A549 (cell line): ENCODE measurements at regions of chrX and their contacts with region 1.

Region 1: GRCh38 chrX:16771483-16772398 is 14.5 kb upstream of the TXLNG start:
- DNase-seq: peak; percentile 50 to 86
- ATAC-seq: peak; percentile 95 to 96
- H3K4me3 ChIP-seq: no peak overlapping the region
- H3K27ac ChIP-seq: peak overlapping the region; percentile 79 to 90
- H3K4me1 ChIP-seq: peaks cover 13% of the 10 kb centered on the region; the same call in 2 of the 3 replicates
- CTCF ChIP-seq: no peak
- EP300 ChIP-seq: no peak
- POLR2A ChIP-seq: peak; percentile 77
- RAD21 ChIP-seq: no peak

Region 2: DNA sequence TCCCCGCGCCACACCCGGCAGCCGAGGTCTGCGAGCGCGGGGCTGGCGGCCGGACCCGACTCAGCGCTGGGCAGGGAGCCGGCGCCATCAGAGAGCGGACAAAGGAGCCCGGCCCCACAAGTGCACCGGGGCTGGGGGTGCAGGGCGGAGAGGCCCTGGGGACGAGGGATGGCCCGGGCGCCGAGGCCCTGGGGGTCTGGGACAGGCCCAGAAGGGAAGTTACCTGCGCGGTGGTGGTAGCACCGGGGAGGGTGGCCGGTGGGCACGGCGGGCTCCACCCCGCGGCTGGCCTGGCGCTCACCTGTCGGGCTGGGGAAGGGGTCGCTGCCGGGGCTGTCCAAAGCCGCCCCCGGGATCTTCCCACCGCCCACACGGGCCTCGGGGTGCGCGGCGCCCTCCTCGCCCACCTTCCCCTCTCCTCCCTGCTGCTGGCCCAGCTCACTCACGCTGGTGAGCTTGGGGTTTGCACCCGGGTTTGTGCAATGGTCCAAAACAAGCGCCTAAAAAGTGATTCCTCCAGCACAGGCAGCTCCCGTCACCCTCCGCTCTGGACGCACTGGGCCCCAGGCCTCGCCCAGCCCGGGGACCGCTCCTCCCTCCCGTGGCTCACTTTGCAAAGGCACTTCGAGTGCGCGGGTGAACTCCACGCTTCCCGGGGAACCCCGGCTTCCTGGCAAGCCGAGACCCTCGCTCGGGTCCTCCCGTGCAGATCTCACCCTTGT is 59.5 kb before region 1 on chrX and contains the start of gene CTPS2:
- CTCF ChIA-PET with region 1: no interaction called
- POLR2A ChIA-PET with region 1: interaction called, 11 read pairs
- DNase-seq: peak; percentile 69 to 79
- ATAC-seq: peak; percentile 96 to 98
- H3K4me3 ChIP-seq: peak within 1 kb of the TSS; percentile 98
- H3K27ac ChIP-seq: peak within 1 kb of the TSS; percentile 97
- H3K4me1 ChIP-seq: no peaks in the 10 kb centered on the region
- CTCF ChIP-seq: no peak
- EP300 ChIP-seq: no peak
- POLR2A ChIP-seq: peak; percentile 67
- RAD21 ChIP-seq: no peak
- polyA plus RNA-seq, gene CTPS2: 16.8 and 18.5 TPM in 2 replicates

Region 3: GRCh38 chrX:16719334-16720084 is 52.2 kb before region 1 on chrX and contains the start of gene SYAP1:
- CTCF ChIA-PET with region 1: no interaction called
- POLR2A ChIA-PET with region 1: interaction called, 37 read pairs
- DNase-seq: peak; percentile 71 to 98
- ATAC-seq: peak; percentile 97 to 98
- H3K4me3 ChIP-seq: peak within 1 kb of the TSS; percentile 87
- H3K27ac ChIP-seq: peak within 1 kb of the TSS; percentile 84 to 95
- H3K4me1 ChIP-seq: peaks cover 33% of the 10 kb centered on the region
- CTCF ChIP-seq: no peak
- EP300 ChIP-seq: no peak
- POLR2A ChIP-seq: peak; percentile 84
- RAD21 ChIP-seq: no peak; a peak in 1 of 5 replicates
- polyA plus RNA-seq, gene SYAP1: 15.7 and 18.9 TPM in 2 replicates

Region 4: DNA sequence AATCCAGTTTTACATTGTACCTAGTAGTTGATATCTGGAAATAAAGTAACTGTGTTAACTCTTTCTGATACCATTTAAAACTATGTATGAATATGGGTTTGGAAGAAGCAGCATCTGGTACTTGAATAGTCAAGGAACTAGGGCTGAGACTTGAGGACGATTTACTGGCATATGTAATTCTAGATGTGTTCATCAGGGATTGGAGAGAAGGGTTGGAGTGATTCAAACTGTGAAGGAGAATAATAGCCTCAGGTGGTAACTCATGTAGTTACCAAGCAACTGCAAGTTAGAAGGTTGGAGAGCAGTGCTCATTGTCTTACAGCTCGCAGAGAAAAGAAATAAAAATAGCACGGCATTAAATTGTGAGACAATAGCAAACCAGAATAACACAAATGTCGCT is 15.0 kb before region 1 on chrX:
- CTCF ChIA-PET with region 1: no interaction called
- POLR2A ChIA-PET with region 1: interaction called, 17 read pairs
- DNase-seq: no peak
- ATAC-seq: no peak
- H3K4me3 ChIP-seq: no peak overlapping the region
- H3K27ac ChIP-seq: no peak overlapping the region
- H3K4me1 ChIP-seq: no peaks in the 10 kb centered on the region
- CTCF ChIP-seq: no peak
- EP300 ChIP-seq: no peak
- POLR2A ChIP-seq: no peak
- RAD21 ChIP-seq: no peak

Region 5: GRCh38 chrX:16786139-16786790 is 14.5 kb after region 1 on chrX and contains the start of gene TXLNG:
- CTCF ChIA-PET with region 1: interaction called, 4 read pairs
- POLR2A ChIA-PET with region 1: interaction called, 22 read pairs
- DNase-seq: peak; percentile 86 to 99
- ATAC-seq: peak; percentile 98 to 99
- H3K4me3 ChIP-seq: peak within 1 kb of the TSS; percentile 89
- H3K27ac ChIP-seq: peak within 1 kb of the TSS; percentile 77 to 100
- H3K4me1 ChIP-seq: peaks cover 24% of the 10 kb centered on the region
- CTCF ChIP-seq: no peak
- EP300 ChIP-seq: no peak
- POLR2A ChIP-seq: peak; percentile 79
- RAD21 ChIP-seq: no peak
- polyA plus RNA-seq, gene TXLNG: 30.8 and 36.8 TPM in 2 replicates

Region 6: GRCh38 chrX:17214962-17215361 is 443.2 kb after region 1 on chrX:
- CTCF ChIA-PET with region 1: no interaction called
- POLR2A ChIA-PET with region 1: no interaction called
- DNase-seq: no peak
- ATAC-seq: no peak
- H3K4me3 ChIP-seq: no peak overlapping the region
- H3K27ac ChIP-seq: no peak overlapping the region
- H3K4me1 ChIP-seq: no peaks in the 10 kb centered on the region
- CTCF ChIP-seq: no peak
- EP300 ChIP-seq: no peak
- POLR2A ChIP-seq: no peak
- RAD21 ChIP-seq: no peak